ENCODE measurements at regions of chr3 and their contacts with region 1.

Region 1: DNA sequence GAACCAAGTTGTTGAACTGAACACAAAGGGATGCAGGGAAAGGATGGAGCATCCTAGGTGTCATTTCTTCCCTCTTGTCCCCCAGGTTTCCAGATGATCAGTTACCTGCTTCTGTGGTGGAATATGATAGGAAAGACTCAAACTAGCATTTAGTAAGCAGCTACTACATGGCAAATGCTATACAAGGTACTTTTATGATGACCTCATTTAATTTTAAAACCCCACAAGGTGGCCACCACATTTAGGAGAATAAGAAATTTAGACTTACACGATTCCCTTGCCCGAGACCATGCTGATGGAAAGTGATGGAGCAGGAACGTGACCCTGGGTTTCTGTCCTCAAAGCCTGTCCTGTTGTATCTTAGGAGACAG is 40.9 kb downstream of the CCR4 start:
- DNase-seq: no peak
- H3K4me3 Mint-ChIP-seq: peak overlapping the region; percentile 79
- H3K27ac Mint-ChIP-seq: peak overlapping the region; percentile 97
- H3K4me1 Mint-ChIP-seq: peaks cover 73% of the 10 kb centered on the region
- H3K27me3 Mint-ChIP-seq: no peaks in the 10 kb centered on the region

Region 2: DNA sequence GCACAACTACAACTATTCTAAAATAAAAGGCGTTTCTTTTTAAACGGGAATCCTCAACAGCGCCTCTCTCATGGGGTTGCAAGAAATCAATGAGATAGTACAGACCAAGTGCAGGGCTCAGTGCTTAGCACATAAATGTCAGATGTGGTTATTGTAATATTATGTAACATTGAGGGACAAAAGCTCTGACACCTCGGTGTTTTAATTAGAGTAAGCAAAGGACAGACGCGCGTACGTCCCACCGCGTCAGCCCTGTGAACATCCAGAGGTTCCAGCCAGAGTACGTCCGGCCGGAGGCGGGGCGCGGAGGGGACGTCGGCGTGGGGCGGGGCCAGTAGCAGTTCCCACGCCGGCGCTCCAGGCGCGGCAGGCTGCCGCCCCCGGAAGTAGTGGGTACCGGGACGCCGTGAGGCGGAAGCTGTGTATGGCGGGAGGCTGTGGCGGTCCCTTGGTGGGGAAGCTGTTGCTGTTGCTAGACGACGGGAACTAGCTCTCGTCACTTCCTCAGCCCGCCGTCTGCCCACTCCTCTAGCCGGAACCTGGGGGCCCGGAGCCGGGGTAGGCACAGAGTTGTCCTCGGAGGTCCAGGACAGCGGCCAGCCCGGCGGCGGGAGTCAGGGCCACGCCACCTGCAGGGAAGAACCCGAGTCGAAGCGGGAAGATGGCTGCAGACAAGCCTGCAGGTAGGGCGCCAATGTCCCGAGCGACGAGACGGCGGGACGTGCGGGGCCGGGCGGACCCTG is 307.3 kb before region 1 on chr3 and contains the start of gene CNOT10:
- intact Hi-C with region 1: loop called (anchors 10 kb)
- DNase-seq: peak; percentile 97
- H3K4me3 Mint-ChIP-seq: peak within 1 kb of the TSS; percentile 87
- H3K27ac Mint-ChIP-seq: peak within 1 kb of the TSS; percentile 90
- H3K4me1 Mint-ChIP-seq: peaks cover 27% of the 10 kb centered on the region
- H3K27me3 Mint-ChIP-seq: peaks cover 3% of the 10 kb centered on the region
- total RNA-seq, gene CNOT10: 51.5 and 53.5 TPM in 2 replicates

Region 3: DNA sequence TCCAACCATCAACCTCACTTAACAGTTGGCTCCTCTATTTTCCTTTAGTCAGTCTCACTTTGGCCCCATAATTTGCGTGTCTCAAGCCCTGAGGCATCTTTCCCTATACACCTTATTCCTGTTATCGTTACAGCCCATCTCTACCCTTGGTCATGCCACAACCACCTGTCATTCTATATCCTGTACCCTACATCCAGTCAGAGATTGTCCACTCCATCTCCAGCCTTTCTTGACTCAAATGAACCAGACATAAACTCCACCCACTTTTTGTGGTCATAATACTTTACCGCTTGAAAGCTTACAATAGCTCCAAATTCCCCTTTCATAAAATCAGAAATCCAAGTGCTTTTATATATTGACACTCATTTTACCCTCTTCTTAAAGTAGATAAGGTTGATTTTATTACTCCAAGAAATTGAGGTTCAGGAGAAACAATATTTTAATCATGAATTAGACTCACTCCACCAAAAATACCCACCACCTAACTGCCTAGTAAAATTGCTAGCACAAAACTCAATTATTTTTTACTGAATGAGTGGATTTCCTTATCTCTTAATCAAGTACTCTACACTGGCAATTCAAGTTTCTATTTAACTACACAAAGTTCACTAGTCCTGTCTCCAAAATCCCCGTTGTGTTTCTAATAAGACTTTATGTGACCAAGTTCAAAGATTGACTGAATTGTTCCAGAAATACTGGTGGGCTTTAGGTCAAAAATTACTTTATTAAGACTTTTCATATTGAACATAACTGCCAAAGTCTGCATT is 31.7 kb before region 1 on chr3:
- intact Hi-C with region 1: loop called (anchors 1 kb)
- DNase-seq: no peak
- H3K4me3 Mint-ChIP-seq: peak overlapping the region; percentile 73
- H3K27ac Mint-ChIP-seq: peak overlapping the region; percentile 99
- H3K4me1 Mint-ChIP-seq: peaks cover 62% of the 10 kb centered on the region
- H3K27me3 Mint-ChIP-seq: no peaks in the 10 kb centered on the region

Region 4: GRCh38 chr3:32973982-32974381 is 18.3 kb before region 1 on chr3:
- intact Hi-C with region 1: loop called (anchors 1 kb)
- DNase-seq: peak; percentile 44
- H3K4me3 Mint-ChIP-seq: no peak overlapping the region
- H3K27ac Mint-ChIP-seq: peak overlapping the region; percentile 28
- H3K4me1 Mint-ChIP-seq: peaks cover 51% of the 10 kb centered on the region
- H3K27me3 Mint-ChIP-seq: no peaks in the 10 kb centered on the region

Region 5: DNA sequence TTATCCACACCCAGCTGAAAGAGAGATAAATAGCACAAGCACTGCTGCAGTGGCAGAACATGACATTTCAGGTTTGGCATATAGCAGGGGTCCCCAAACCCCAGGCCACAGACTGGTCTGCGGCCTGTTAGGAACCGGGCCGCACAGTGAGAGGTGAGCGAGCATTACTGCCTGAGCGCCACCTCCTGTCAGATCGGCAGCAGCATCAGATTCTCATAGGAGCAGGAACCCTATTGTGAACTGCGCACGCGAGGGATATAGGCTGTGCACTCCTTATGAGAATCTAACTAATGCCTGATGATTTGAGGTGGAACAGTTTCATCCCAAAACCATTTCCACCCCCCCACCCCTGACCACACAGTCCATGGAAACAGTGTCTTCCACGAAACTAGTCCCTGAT is 13.8 kb after region 1 on chr3:
- intact Hi-C with region 1: loop called (anchors 1 kb)
- DNase-seq: no peak
- H3K4me3 Mint-ChIP-seq: no peak overlapping the region
- H3K27ac Mint-ChIP-seq: peak overlapping the region; percentile 84
- H3K4me1 Mint-ChIP-seq: peaks cover 59% of the 10 kb centered on the region
- H3K27me3 Mint-ChIP-seq: no peaks in the 10 kb centered on the region

Region 6: DNA sequence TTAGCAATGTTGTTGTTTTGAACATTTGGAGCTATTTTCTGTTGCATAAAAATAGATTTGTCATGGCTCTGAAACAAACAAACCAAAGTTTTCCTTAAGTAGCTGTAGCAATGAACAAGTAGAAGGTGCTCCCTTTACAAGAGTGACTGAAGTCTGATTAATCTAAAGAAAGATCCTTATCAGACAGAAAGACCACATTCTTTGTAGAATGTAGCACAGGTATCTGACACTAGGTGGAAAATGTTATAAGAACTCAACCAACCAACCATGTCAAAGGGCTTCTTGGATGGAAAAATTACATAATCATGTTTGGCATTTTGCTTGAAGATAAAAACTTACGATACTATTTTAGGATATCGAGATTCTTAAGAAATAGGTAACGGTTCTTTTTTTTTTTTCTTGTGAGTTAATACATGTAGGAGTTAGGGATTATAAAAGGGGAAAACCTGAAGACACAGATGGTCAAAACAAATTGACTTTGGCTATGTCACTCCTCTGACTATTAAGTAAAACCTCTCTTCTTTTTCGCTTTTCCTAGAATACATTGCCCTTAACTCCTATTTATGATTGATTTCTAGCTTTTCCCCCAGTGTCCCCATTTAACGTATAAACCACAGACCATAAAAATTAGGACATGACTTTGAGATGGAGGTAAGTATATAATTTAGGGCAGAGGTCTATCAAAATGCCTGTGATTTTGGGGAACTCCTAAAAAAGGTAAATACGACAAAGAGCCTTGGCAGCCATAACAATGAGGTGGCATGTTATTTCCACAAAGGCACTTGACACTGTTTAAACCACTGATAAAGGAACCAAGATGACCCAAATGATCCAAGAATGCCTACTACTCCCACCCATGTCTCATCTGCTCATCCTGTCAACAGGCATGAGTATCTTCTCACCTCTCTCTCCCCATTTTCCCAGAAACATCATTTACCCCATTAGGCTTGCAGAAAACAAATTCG is 31.1 kb after region 1 on chr3:
- intact Hi-C with region 1: loop called (anchors 1 kb)
- DNase-seq: no peak
- H3K4me3 Mint-ChIP-seq: peak overlapping the region; percentile 14
- H3K27ac Mint-ChIP-seq: peak overlapping the region; percentile 89
- H3K4me1 Mint-ChIP-seq: peaks cover 54% of the 10 kb centered on the region
- H3K27me3 Mint-ChIP-seq: no peaks in the 10 kb centered on the region

Region 7: GRCh38 chr3:33047842-33048834 is 55.8 kb after region 1 on chr3:
- intact Hi-C with region 1: loop called (anchors 2 kb)
- DNase-seq: peak; percentile 62
- H3K4me3 Mint-ChIP-seq: peak overlapping the region; percentile 66
- H3K27ac Mint-ChIP-seq: peak overlapping the region; percentile 98
- H3K4me1 Mint-ChIP-seq: peaks cover 63% of the 10 kb centered on the region
- H3K27me3 Mint-ChIP-seq: no peaks in the 10 kb centered on the region

Region 8: DNA sequence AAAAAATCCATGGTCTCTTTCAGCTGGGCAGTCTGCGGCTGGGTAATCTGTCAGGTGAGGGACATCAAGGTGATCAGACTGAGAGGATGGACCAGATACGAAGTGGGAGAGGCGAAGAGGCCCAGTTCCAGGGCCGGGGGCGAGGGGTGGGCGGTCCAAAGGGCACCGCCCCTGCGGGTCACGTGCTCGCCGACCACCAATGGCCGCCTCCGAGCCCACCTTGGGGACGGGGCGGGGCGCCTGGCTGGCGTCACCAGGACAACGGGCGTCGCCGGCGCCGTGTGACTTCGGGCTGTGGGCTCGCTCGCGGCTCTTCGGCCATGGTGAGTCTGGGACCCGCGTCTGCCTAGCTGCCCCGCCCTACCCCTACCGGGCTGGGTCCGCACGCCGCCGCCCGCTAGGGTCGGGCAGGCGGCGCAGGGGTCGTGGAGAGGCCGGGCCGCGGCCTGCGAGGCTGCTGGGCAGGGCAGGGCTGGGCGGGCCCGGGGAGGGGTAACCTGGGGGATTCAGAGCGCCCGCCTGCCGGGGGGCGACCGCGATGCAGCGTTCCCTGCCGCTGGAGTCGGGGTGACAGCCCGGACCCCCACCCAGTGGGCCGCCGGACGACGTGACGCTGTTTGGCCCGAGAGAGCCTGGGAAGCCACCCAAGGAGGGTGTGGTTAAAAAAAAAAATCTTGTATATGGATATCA is 285.0 kb after region 1 on chr3 and contains the start of gene FBXL2:
- intact Hi-C with region 1: no loop called
- DNase-seq: no peak
- H3K4me3 Mint-ChIP-seq: peak within 1 kb of the TSS; percentile 58
- H3K27ac Mint-ChIP-seq: no peak within 1 kb of the TSS
- H3K4me1 Mint-ChIP-seq: peaks cover 2% of the 10 kb centered on the region
- H3K27me3 Mint-ChIP-seq: peaks cover 29% of the 10 kb centered on the region
- total RNA-seq, gene FBXL2: 0.07 TPM in 1 of 2 replicates, not detected in the other

Measured in activated T-helper 2 cell treated with anti-CD3 and anti-CD28 coated beads, Interferon-gamma antibody, Interleukin-2, Interleukin-4, amounts not matched to agents 10 μg/mL and 5 μg/mL and 100 μg/mL, durations not matched to agents 14 hours and 24 hours and 36 hours (primary cell).